ENCODE measurements at regions of chr19 and their contacts with region 1.

Region 1: GRCh38 chr19:47075179-47075810 is 26.9 kb upstream of the TMEM160 start:
- DNase-seq: no peak
- H3K4me3 ChIP-seq: no peak overlapping the region
- H3K27ac ChIP-seq: no peak overlapping the region
- H3K4me1 ChIP-seq: peaks cover 5 to 36% (median 8%) of the 10 kb centered on the region in 4 donors
- H3K27me3 ChIP-seq: no peaks in the 10 kb centered on the region
- CTCF ChIP-seq: no peak
- EP300 ChIP-seq: no peak
- POLR2A ChIP-seq: no peak

Region 2: GRCh38 chr19:47120470-47121067 is 45.3 kb after region 1 on chr19:
- intact Hi-C with region 1: no loop called
- DNase-seq: no peak
- H3K4me3 ChIP-seq: no peak overlapping the region
- H3K27ac ChIP-seq: no peak overlapping the region
- H3K4me1 ChIP-seq: peaks cover 4 to 25% (median 22%) of the 10 kb centered on the region in 4 donors
- H3K27me3 ChIP-seq: no peaks in the 10 kb centered on the region
- CTCF ChIP-seq: no peak
- EP300 ChIP-seq: no peak
- POLR2A ChIP-seq: no peak

Region 3: GRCh38 chr19:47130591-47131227 is 55.4 kb after region 1 on chr19 and contains the start of gene SAE1:
- intact Hi-C with region 1: loop called (anchors 1 kb)
- DNase-seq: peak; percentile 99
- H3K4me3 ChIP-seq: peak within 1 kb of the TSS; percentile 63 to 97 (median 85)
- H3K27ac ChIP-seq: peak within 1 kb of the TSS; percentile 85 to 97 (median 96)
- H3K4me1 ChIP-seq: peaks cover 13 to 51% (median 47%) of the 10 kb centered on the region in 4 donors
- H3K27me3 ChIP-seq: no peaks in the 10 kb centered on the region
- CTCF ChIP-seq: peak; percentile 57 to 88 (median 61)
- EP300 ChIP-seq: no peak
- POLR2A ChIP-seq: peak; percentile 49
- total RNA-seq, gene SAE1: 130 to 143 (median 136) TPM

Measured in esophagus muscularis mucosa (tissue), 4 donors.